Mammary epithelial cell (primary cell): ENCODE measurements at regions of chr21 and their contacts with region 1.

Region 1: GRCh38 chr21:33127154-33127893 is 57.4 kb downstream of the OLIG1 start:
- DNase-seq: peak; percentile 44
- H3K4me3 ChIP-seq: no peak overlapping the region
- H3K27ac ChIP-seq: no peak overlapping the region
- H3K4me1 ChIP-seq: no peaks in the 10 kb centered on the region
- H3K27me3 ChIP-seq: no peaks in the 10 kb centered on the region
- CTCF ChIP-seq: peak; percentile 75 to 86

Region 2: DNA sequence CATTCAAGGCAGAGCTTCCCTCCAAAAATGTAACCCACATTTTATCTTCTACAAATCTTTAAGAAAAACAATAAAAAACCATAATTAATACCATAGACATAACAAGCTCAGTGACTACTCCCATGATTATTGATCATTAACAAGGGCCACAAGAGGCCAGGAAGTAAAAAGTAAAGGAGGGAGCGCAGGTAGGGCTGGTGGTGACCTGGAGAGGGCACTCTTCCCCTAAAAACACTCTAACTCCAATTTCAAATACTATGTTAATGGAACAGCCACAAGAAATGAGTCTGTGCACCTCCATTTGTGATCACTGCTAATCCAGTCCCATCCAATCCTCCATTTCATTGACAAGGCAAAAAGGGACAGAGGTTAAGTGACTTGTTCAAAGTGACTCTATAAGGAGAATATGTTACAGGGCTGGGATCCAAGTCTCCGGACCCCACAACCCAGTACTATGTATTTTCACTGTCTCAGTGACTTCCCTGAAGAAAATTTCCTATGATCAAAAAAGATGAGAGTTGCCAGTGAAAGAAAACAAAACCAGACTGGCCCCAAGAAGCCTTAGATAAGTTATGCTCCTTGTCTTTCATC is 473.9 kb before region 1 on chr21:
- CTCF ChIA-PET with region 1: no interaction called
- dilution Hi-C with region 1: no loop called
- in situ Hi-C with region 1: no loop called
- intact Hi-C with region 1: loop called (anchors 10 kb)
- DNase-seq: peak; percentile 3
- H3K4me3 ChIP-seq: no peak overlapping the region
- H3K27ac ChIP-seq: no peak overlapping the region
- H3K4me1 ChIP-seq: no peaks in the 10 kb centered on the region
- H3K27me3 ChIP-seq: no peaks in the 10 kb centered on the region
- CTCF ChIP-seq: peak; percentile 55 to 65

Region 3: GRCh38 chr21:32834916-32835235 is 292.4 kb before region 1 on chr21:
- CTCF ChIA-PET with region 1: no interaction called
- dilution Hi-C with region 1: no loop called
- in situ Hi-C with region 1: no loop called
- intact Hi-C with region 1: loop called (anchors 1 kb)
- DNase-seq: no peak
- H3K4me3 ChIP-seq: no peak overlapping the region
- H3K27ac ChIP-seq: no peak overlapping the region
- H3K4me1 ChIP-seq: no peaks in the 10 kb centered on the region
- H3K27me3 ChIP-seq: peaks cover 5% of the 10 kb centered on the region
- CTCF ChIP-seq: no peak

Region 4: DNA sequence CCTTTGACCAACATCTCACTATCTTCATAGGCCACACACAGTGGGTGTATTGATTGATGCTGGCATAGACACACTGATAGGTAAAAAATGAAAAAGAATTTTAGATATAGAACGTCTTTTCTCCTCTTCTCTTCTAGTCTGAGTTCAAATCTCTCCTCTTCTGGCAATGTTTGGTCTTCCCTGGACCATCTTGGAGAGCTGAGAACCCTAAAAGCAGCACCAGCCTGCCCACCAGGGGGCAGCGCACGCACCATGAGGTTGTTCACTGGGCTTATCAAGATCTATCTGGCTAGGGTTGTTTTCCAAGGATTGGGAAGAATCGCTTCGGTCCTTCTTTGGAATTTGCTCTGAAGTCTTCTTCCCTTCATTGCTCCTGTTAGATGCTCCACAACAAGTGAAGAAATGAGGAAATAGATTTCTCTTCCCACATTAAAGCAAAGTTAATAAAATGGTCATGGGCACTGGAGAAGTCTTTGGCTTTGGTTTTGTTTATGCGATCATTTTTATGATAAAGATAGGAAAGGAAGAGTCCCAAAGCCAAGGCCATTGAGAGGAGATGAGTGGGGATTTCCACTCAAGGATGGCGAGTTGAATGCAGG is 205.6 kb before region 1 on chr21:
- CTCF ChIA-PET with region 1: no interaction called
- dilution Hi-C with region 1: no loop called
- in situ Hi-C with region 1: no loop called
- intact Hi-C with region 1: loop called (anchors 1 kb)
- DNase-seq: no peak
- H3K4me3 ChIP-seq: no peak overlapping the region
- H3K27ac ChIP-seq: no peak overlapping the region
- H3K4me1 ChIP-seq: no peaks in the 10 kb centered on the region
- H3K27me3 ChIP-seq: no peaks in the 10 kb centered on the region
- CTCF ChIP-seq: peak; percentile 52 to 57

Region 5: GRCh38 chr21:32940079-32941014 is 187.0 kb before region 1 on chr21:
- CTCF ChIA-PET with region 1: interaction called, 3 read pairs
- dilution Hi-C with region 1: no loop called
- in situ Hi-C with region 1: no loop called
- intact Hi-C with region 1: loop called (anchors 1 kb)
- DNase-seq: peak; percentile 26
- H3K4me3 ChIP-seq: no peak overlapping the region
- H3K27ac ChIP-seq: no peak overlapping the region
- H3K4me1 ChIP-seq: no peaks in the 10 kb centered on the region
- H3K27me3 ChIP-seq: no peaks in the 10 kb centered on the region
- CTCF ChIP-seq: peak; percentile 82 to 83

Region 6: DNA sequence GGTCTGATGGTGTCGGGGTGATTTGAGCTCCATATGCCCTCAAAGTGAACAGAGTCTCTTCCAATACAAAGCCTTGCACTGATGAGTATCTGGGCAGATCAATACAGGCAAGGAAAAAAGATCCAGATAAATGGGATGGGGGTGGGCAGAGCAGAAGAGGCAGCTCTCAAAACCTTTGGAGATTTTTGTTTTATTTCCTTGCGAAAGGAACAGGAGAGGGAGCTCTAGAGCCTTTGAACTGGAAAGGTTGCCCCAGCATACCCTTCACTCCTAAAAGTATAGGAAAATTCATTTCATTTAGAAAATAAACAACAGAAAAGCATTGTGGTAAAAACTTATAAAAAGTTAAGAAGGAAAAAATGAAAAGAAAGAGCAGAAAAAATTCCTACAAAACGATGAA is 133.0 kb before region 1 on chr21:
- CTCF ChIA-PET with region 1: interaction called, 18 read pairs
- dilution Hi-C with region 1: no loop called
- in situ Hi-C with region 1: no loop called
- intact Hi-C with region 1: loop called (anchors 1 kb)
- DNase-seq: no peak
- H3K4me3 ChIP-seq: no peak overlapping the region
- H3K27ac ChIP-seq: no peak overlapping the region
- H3K4me1 ChIP-seq: peaks cover 5% of the 10 kb centered on the region
- H3K27me3 ChIP-seq: no peaks in the 10 kb centered on the region
- CTCF ChIP-seq: peak in 1 of 2 donors; percentile 62

Region 7: GRCh38 chr21:33441489-33442477 is 314.5 kb after region 1 on chr21:
- CTCF ChIA-PET with region 1: no interaction called
- dilution Hi-C with region 1: no loop called
- in situ Hi-C with region 1: no loop called
- intact Hi-C with region 1: loop called (anchors 10 kb)
- DNase-seq: peak; percentile 96
- H3K4me3 ChIP-seq: no peak overlapping the region
- H3K27ac ChIP-seq: peak overlapping the region; percentile 70
- H3K4me1 ChIP-seq: peaks cover 19% of the 10 kb centered on the region
- H3K27me3 ChIP-seq: no peaks in the 10 kb centered on the region
- CTCF ChIP-seq: no peak